Heart right ventricle (tissue), 16 donors: ENCODE measurements at regions of chr2 and their contacts with region 1.

Region 1: DNA sequence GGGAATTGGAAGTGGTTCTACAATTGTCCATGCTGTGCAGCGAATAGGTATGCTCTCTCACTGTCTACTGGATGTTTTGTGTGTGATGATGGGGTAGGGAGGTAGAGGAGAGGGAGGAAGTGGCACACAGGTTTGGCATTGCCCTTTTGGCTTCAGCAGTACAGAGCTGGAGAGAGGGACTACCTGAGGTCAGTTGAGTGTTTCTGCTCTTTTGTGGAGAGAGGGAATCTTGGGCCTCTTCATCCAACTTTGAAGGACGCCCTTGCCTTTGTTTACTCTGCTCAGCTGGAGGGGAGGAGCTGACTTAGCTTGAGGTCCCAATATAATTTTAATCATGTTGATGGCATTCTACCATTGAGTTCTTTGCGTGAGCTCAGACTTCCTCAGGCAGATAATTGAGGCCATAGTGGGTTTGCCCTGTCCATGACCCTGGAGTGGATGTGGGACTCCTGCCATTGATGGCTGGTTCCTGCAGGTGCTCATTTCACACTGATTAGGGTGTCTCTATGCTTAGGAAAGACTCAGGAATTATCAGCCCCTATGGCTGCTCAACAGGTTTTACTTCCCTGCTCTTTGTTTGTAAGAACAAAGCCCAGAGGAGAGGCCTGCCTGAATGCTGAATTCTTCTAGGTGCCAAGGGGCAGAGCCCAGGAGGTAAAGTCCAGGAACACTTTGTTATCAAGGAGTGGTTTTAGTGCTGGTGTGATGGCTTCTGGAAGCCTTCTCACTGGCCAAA is 7.2 kb downstream of the RPIA start:
- DNase-seq: no peak
- ATAC-seq: peak in 4 of 8 donors; percentile 31 to 61 (median 51)
- H3K4me3 ChIP-seq: no peak overlapping the region
- H3K27ac ChIP-seq: no peak overlapping the region
- H3K4me1 ChIP-seq: peaks cover 0 to 42% (median 13%) of the 10 kb centered on the region in 9 donors
- H3K27me3 ChIP-seq: no peaks in the 10 kb centered on the region
- CTCF ChIP-seq: no peak

Region 2: GRCh38 chr2:88713408-88713807 is 14.7 kb after region 1 on chr2:
- intact Hi-C with region 1: loop called in 1 of 10 experiments (anchors 1 kb)
- DNase-seq: no peak
- ATAC-seq: peak in 4 of 8 donors; percentile 43 to 62 (median 48)
- H3K4me3 ChIP-seq: no peak overlapping the region
- H3K27ac ChIP-seq: peak overlapping the region in 2 of 10 donors; percentile 2 to 25
- H3K4me1 ChIP-seq: peaks cover 0 to 36% (median 11%) of the 10 kb centered on the region in 9 donors
- H3K27me3 ChIP-seq: no peaks in the 10 kb centered on the region
- CTCF ChIP-seq: no peak

Region 3: DNA sequence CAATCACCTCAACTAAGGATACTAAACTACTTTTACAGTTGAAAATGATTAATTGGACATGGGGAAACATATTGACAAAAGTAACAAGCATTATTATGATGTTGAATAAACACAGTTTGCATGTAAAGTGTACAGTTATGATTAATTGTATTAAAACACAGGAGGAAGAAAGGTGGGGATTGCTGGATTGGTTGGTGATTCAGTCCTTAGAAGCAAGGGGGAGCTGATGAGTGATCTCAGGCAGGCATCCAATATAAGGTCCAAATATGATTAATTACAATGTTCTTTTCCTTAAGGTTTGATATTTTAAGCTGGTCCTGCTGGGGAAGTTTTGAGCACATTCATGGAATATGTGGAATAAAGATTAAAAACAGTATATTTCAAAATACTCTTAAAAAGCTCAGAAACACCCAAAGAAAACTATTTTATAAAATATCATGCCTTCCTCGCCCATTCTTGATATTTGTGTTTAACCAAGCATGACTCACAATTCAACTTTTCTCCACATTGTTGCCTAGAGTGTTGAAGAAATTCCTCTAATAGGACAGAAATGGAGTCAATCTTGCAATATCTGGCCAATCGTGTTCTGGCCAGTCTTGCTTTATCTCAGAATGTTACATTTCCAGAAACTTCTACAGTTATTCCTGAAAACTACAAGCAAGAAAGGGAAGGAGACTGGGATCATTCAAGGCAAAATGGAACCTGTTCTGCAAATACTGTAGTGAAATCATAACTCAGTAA is 261.0 kb after region 1 on chr2:
- intact Hi-C with region 1: no loop called
- DNase-seq: no peak
- ATAC-seq: no peak
- H3K4me3 ChIP-seq: no peak overlapping the region
- H3K27ac ChIP-seq: no peak overlapping the region
- H3K4me1 ChIP-seq: no peaks in the 10 kb centered on the region
- H3K27me3 ChIP-seq: peaks cover 0 to 40% (median 12%) of the 10 kb centered on the region in 7 donors
- CTCF ChIP-seq: peak in 2 of 9 donors; percentile 21